CD8-positive, alpha-beta T cell (primary cell): ENCODE measurements at regions of chr1 and their contacts with region 1.

Region 1: GRCh38 chr1:37673920-37674319 is 18.4 kb upstream of the CDCA8 start:
- DNase-seq: peak in 8 of 9 experiments; percentile 45 to 87 (median 64)
- ATAC-seq: peak; percentile 94
- H3K4me3 ChIP-seq: peak overlapping the region; percentile 7 to 20
- H3K4me3 Mint-ChIP-seq: peak overlapping the region; percentile 37
- H3K27ac ChIP-seq: no peak overlapping the region
- H3K27ac Mint-ChIP-seq: peak overlapping the region; percentile 57
- H3K4me1 ChIP-seq: peaks cover 22% of the 10 kb centered on the region
- H3K4me1 Mint-ChIP-seq: peaks cover 27% of the 10 kb centered on the region
- H3K27me3 ChIP-seq: no peaks in the 10 kb centered on the region
- H3K27me3 Mint-ChIP-seq: peaks cover 9% of the 10 kb centered on the region
- CTCF ChIP-seq: no peak

Region 2: DNA sequence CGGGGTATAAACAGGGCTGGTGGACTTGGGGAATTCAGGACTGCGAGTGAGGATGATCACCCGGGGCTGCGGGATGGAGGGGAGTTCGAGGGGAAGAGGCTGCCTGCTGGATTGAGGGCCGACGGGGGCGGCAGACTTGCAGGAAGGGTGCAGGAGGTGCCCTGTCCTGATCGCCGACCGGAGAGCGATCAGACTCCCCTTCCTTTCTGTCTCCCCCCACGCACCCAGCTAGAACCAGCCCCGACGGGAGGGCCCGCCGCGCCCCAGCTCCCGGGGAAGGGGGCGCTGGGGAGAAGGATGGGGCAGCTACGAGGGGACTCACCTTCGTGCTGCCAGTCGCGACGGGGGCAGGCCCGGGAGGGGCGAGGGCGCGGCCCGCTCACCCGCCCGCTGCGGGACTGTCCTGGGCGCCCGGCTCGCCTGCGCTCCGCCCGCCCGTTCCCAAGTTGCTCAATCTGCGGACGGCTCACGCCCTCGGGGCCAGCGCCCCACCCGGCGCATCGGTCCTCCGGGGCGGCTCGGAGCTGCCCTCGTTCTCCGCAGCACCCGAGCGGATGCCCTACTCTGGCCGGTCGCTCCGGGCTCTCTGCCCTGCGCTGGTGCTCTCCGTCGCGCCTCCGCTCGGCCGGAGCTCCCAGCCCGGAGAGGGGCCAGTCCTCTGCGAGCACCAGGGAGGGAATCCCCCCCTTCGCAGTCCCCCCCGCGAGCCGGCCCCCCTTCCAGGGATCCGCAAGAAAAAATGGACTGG is 39.5 kb before region 1 on chr1 and contains the start of gene RSPO1:
- CTCF ChIA-PET with region 1: no interaction called
- POLR2A ChIA-PET with region 1: no interaction called
- intact Hi-C with region 1: loop called in 1 of 2 experiments (anchors 2 kb)
- DNase-seq: no peak
- ATAC-seq: no peak
- H3K4me3 ChIP-seq: no peak within 1 kb of the TSS
- H3K4me3 Mint-ChIP-seq: peak within 1 kb of the TSS; percentile 45
- H3K27ac ChIP-seq: no peak within 1 kb of the TSS
- H3K27ac Mint-ChIP-seq: no peak within 1 kb of the TSS
- H3K4me1 ChIP-seq: no peaks in the 10 kb centered on the region
- H3K4me1 Mint-ChIP-seq: peaks cover 10% of the 10 kb centered on the region
- H3K27me3 ChIP-seq: peaks cover 13 to 22% of the 10 kb centered on the region in 2 experiments
- H3K27me3 Mint-ChIP-seq: peaks cover 65% of the 10 kb centered on the region
- CTCF ChIP-seq: no peak
- total RNA-seq, gene RSPO1: not detected